ENCODE measurements at regions of chr15 and their contacts with region 1.

Region 1: GRCh38 chr15:56028430-56028829 is 35.0 kb upstream of the NEDD4 start:
- DNase-seq: no peak
- ATAC-seq: no peak
- H3K4me3 ChIP-seq: no peak overlapping the region
- H3K27ac ChIP-seq: no peak overlapping the region
- H3K4me1 ChIP-seq: no peaks in the 10 kb centered on the region
- H3K27me3 ChIP-seq: no peaks in the 10 kb centered on the region
- CTCF ChIP-seq: no peak
- POLR2A ChIP-seq: no peak

Region 2: GRCh38 chr15:56017920-56018319 is 10.5 kb before region 1 on chr15:
- in situ Hi-C with region 1: no loop called
- intact Hi-C with region 1: loop called (anchors 1 kb)
- DNase-seq: no peak
- ATAC-seq: no peak
- H3K4me3 ChIP-seq: no peak overlapping the region
- H3K27ac ChIP-seq: no peak overlapping the region
- H3K4me1 ChIP-seq: no peaks in the 10 kb centered on the region
- H3K27me3 ChIP-seq: no peaks in the 10 kb centered on the region
- CTCF ChIP-seq: no peak
- POLR2A ChIP-seq: no peak